ENCODE measurements at regions of chr16 and their contacts with region 1.

Region 1: DNA sequence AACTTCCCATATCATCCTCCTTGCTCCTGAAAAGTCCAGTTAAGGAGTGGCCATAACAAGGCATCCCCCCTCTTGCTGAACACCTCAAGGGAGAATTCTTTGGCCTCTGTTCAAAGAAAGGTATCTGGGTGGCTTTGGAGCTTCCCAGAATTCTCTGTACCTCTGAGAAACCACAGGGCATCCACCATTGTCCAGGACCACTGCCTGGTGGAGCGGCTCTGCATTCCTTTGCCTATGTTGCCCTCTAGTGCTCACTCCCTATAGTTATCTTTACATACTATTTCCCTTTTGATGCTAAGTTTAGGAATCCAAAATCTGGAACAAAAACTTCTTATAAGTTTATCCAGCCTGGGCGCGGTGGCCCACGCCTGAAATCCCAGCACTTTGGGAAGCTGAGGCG is 30.3 kb downstream of the CHD9NB start:
- DNase-seq: no peak
- ATAC-seq: no peak
- H3K4me3 ChIP-seq: no peak overlapping the region
- H3K4me3 Mint-ChIP-seq: no peak overlapping the region
- H3K27ac ChIP-seq: no peak overlapping the region
- H3K27ac Mint-ChIP-seq: no peak overlapping the region
- H3K4me1 ChIP-seq: no peaks in the 10 kb centered on the region
- H3K4me1 Mint-ChIP-seq: no peaks in the 10 kb centered on the region
- H3K27me3 ChIP-seq: no peaks in the 10 kb centered on the region
- H3K27me3 Mint-ChIP-seq: peaks cover 0 to 5% (median 4%) of the 10 kb centered on the region in 5 donors

Region 2: GRCh38 chr16:52191531-52192134 is 830.7 kb before region 1 on chr16:
- CTCF ChIA-PET with region 1: no interaction called
- POLR2A ChIA-PET with region 1: no interaction called
- intact Hi-C with region 1: loop called in 1 of 2 experiments (anchors 5 kb)
- DNase-seq: peak in 7 of 9 donors; percentile 6 to 43 (median 19)
- ATAC-seq: peak; percentile 47
- H3K4me3 ChIP-seq: no peak overlapping the region
- H3K4me3 Mint-ChIP-seq: no peak overlapping the region
- H3K27ac ChIP-seq: no peak overlapping the region
- H3K27ac Mint-ChIP-seq: no peak overlapping the region
- H3K4me1 ChIP-seq: no peaks in the 10 kb centered on the region
- H3K4me1 Mint-ChIP-seq: no peaks in the 10 kb centered on the region
- H3K27me3 ChIP-seq: no peaks in the 10 kb centered on the region
- H3K27me3 Mint-ChIP-seq: no peaks in the 10 kb centered on the region

Region 3: DNA sequence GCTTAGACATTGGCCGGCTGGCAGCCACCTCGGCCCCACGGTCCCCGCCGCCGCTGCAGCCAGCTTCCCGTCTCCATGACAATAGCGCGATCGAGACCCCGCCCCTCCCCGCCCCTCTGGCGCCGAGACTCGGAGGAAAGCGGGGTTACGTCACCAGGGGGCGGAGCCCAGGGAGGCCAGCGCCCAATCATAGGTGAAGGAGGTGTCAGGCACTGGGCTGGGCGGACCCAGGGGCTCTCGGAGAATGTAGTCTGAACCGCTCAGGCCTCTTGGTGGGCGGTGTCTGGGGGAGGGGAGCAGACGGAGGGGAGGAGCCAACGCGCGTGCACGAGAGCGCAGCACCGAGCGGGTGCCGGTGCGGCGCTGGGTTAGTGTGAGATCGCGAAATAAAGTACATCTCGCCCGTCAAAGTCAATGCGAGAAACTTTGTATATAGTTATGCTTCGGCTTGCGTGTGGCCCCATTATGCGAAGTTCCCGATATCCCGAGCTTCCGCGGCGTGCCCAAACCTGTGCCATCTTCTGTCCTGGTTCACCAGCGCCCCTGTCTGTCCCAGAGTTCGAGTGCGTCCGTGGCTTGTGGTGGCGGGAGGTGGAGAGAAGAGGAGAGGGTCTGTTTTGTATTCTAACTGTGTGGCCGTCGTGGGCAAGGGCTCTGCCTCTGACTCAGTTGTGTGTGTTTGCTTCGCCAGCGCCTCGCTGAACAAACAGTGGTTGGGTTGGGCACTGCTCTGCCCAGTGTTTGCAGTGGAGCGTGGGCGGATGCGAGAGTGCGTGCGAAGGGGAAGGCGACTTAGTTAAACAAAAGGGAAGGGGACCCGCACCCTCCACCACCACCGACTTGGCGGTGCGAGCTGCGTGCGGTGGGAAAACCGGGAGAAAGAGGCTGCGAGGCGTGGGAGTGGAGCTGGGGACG is 1907.0 kb after region 1 on chr16:
- CTCF ChIA-PET with region 1: no interaction called
- POLR2A ChIA-PET with region 1: no interaction called
- intact Hi-C with region 1: no loop called
- DNase-seq: peak; percentile 82 to 96 (median 88)
- ATAC-seq: peak; percentile 97
- H3K4me3 ChIP-seq: peak overlapping the region; percentile 70
- H3K4me3 Mint-ChIP-seq: peak overlapping the region; percentile 84 to 96 (median 93)
- H3K27ac ChIP-seq: no peak overlapping the region
- H3K27ac Mint-ChIP-seq: peak overlapping the region in 7 of 9 donors; percentile 13 to 93 (median 59)
- H3K4me1 ChIP-seq: peaks cover 9 to 12% of the 10 kb centered on the region in 2 donors
- H3K4me1 Mint-ChIP-seq: peaks cover 16 to 36% (median 32%) of the 10 kb centered on the region in 7 donors
- H3K27me3 ChIP-seq: peaks cover 8 to 47% of the 10 kb centered on the region in 2 donors
- H3K27me3 Mint-ChIP-seq: peaks cover 63 to 73% (median 68%) of the 10 kb centered on the region in 5 donors

Measured in naive thymus-derived CD4-positive, alpha-beta T cell (primary cell).